ENCODE measurements at regions of chr17 and their contacts with region 1.

Region 1: DNA sequence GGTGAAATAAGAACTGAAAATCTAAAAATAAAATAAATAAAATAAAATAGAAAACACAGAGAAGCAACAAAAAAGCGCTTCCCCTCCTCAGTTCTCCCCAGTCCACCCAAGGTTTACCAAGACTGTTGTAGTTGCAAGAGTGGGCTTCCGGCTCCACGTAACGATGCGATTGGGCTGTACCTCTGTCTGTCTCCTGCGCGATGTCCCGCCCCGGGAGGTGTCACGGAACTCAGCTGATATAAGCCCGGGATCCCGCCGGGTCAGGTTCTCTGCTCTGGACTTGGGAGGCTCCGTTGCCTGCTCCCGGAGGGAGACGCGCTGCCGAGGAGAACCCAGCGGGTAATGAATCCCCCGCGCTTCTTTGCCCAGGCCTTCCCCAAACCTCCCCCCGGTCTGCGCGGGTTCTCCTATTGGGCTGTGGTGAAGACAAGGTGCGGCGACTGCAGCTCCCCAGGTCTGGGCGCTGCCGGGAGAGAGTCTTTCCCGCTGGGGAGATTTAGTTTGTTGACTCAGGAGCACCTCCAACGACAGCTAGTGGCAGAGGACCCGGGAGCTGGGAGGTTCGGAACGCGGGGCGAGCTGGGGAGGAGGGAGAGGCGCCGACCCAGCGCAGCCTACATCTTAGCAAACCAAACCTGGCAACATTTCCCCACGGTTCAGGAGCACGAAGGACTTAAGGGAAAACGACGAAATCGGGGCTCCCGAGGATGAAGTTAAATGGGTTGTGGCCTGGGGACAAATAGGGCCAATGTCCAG is at the start of gene SLFN5:
- DNase-seq: peak; percentile 76
- ATAC-seq: peak; percentile 91
- H3K4me3 ChIP-seq: peak within 1 kb of the TSS; percentile 73 to 75
- H3K27ac ChIP-seq: peak within 1 kb of the TSS; percentile 58
- H3K4me1 ChIP-seq: peaks cover 28% of the 10 kb centered on the region in 2 experiments
- H3K27me3 ChIP-seq: no peaks in the 10 kb centered on the region
- CTCF ChIP-seq: no peak
- POLR2A ChIP-seq: no peak
- RAD21 ChIP-seq: no peak
- total RNA-seq, gene SLFN5: 23.7 TPM

Region 2: DNA sequence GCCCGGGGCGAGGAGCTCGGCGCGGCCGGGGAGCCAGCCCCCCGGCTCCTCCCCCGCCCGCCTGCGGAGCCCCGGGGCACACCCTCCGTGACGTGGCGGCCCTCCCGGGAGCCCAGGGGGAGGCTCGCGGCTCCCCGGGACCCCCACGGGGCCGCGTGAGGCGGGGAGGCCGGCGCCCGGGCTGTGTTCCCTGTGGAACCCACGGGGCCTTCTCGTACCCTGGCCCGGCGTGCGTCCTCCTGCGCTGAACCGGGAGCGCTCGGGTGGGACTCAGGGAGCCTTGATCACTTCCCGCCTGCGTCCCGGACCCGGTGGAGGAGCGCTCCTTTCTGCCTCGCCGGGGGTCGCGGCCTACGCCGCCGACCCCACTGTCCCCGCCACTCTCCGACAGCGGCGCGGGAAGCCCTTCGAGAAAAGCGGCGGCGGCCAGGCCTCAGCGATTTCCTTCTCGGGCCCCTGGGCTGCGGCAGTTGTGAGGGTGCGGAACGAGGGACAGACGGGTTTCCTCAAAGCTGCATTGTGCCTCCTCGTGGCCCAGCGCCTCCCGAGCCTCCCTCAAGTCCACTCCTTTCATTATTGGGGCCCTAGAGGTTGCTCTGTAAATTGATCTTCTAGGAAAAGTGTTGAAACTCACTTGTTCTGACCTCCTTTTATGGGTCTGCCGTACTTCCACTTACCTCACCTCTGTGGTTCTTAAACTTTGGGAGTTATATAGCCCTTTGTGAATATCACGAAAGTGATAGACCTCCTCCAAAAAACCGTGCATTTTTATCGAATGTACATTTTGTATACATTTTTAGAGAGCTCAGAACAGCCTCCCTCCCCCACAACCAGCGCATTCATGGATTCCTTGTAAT is 262.1 kb before region 1 on chr17:
- CTCF ChIA-PET with region 1: no interaction called
- POLR2A ChIA-PET with region 1: no interaction called
- RAD21 ChIA-PET with region 1: no interaction called
- intact Hi-C with region 1: loop called (anchors 5 kb)
- DNase-seq: peak; percentile 56
- ATAC-seq: peak; percentile 88
- H3K4me3 ChIP-seq: peak overlapping the region; percentile 68 to 80
- H3K27ac ChIP-seq: peak overlapping the region; percentile 87
- H3K4me1 ChIP-seq: peaks cover 9 to 19% of the 10 kb centered on the region in 2 experiments; a peak in 3 of 4 replicates
- H3K27me3 ChIP-seq: no peaks in the 10 kb centered on the region
- CTCF ChIP-seq: peak; percentile 27 to 38 (median 35); a peak in 5 of 6 replicates
- POLR2A ChIP-seq: no peak
- RAD21 ChIP-seq: peak; percentile 40

Region 3: GRCh38 chr17:35141681-35142466 is 101.1 kb before region 1 on chr17 and contains the start of gene NLE1:
- CTCF ChIA-PET with region 1: no interaction called
- POLR2A ChIA-PET with region 1: no interaction called
- RAD21 ChIA-PET with region 1: no interaction called
- intact Hi-C with region 1: loop called (anchors 1 kb)
- DNase-seq: peak; percentile 71
- ATAC-seq: peak; percentile 93
- H3K4me3 ChIP-seq: peak within 1 kb of the TSS; percentile 97 to 99
- H3K27ac ChIP-seq: peak within 1 kb of the TSS; percentile 70
- H3K4me1 ChIP-seq: peaks cover 3 to 10% of the 10 kb centered on the region in 2 experiments; a peak in 3 of 4 replicates
- H3K27me3 ChIP-seq: no peaks in the 10 kb centered on the region
- CTCF ChIP-seq: peak; percentile 63 to 83 (median 83)
- POLR2A ChIP-seq: no peak
- RAD21 ChIP-seq: peak; percentile 41
- total RNA-seq, gene NLE1: 55.5 TPM

Region 4: DNA sequence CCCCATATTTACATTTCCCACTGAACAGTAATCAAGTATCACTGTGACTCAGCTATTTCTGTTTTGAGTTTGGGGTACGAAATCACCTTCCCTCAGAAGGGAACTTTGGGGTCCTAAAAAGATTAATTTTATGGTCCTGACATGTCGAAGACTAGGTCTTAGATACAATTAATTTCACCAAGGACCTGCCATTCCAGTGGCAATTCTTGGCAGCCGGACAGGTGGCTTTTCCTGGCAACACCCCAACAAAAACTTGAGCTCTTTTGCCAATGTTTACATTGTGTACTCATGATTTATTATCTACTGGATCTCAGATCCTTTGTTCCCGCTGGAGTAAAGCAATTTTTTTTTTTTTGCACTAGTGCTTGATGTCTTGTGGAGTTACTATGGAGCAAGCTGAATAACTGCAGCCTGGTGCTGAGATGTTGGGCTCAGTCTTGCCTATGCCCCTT is 14.3 kb after region 1 on chr17:
- CTCF ChIA-PET with region 1: no interaction called
- POLR2A ChIA-PET with region 1: interaction called, 12 read pairs
- RAD21 ChIA-PET with region 1: no interaction called
- intact Hi-C with region 1: no loop called
- DNase-seq: peak; percentile 59
- ATAC-seq: peak; percentile 46
- H3K4me3 ChIP-seq: no peak overlapping the region
- H3K27ac ChIP-seq: peak overlapping the region; percentile 34; the same call in 1 of the 2 replicates
- H3K4me1 ChIP-seq: peaks cover 36 to 46% of the 10 kb centered on the region in 2 experiments
- H3K27me3 ChIP-seq: peaks cover 6% of the 10 kb centered on the region; the same call in 1 of the 2 replicates
- CTCF ChIP-seq: no peak
- POLR2A ChIP-seq: no peak
- RAD21 ChIP-seq: no peak

Region 5: DNA sequence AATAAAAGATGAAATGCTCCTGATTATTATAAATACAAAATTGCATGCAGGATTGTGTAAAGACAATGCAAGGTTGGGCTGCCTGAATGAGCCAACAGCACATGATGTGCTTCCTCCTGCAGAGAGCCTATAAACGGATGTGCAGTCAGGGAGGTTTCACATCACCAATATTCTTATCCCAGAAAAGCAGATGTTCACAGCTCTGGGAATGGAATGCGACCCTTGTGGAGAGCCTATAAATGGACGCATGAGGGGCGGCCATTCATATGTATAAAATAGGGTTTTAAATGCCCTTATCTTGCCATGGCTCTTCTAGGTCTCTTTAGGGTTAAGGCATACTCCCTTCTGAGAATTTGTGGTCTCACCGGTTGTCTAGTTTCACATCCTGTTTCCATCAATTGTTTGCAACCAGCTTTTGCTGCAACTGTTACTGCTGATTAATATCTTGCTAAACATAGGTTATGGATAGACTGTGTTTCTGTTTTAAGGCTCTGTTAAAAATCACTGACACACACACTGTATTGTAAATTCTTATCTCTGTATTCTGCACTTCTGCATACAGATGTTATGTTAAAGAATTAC is 98.5 kb after region 1 on chr17:
- CTCF ChIA-PET with region 1: no interaction called
- POLR2A ChIA-PET with region 1: no interaction called
- RAD21 ChIA-PET with region 1: no interaction called
- intact Hi-C with region 1: no loop called
- DNase-seq: no peak
- ATAC-seq: no peak
- H3K4me3 ChIP-seq: no peak overlapping the region
- H3K27ac ChIP-seq: no peak overlapping the region
- H3K4me1 ChIP-seq: no peaks in the 10 kb centered on the region
- H3K27me3 ChIP-seq: peaks cover 34% of the 10 kb centered on the region
- CTCF ChIP-seq: no peak
- POLR2A ChIP-seq: no peak
- RAD21 ChIP-seq: no peak

Region 6: GRCh38 chr17:36133602-36134236 is 890.7 kb after region 1 on chr17:
- CTCF ChIA-PET with region 1: no interaction called
- POLR2A ChIA-PET with region 1: no interaction called
- RAD21 ChIA-PET with region 1: no interaction called
- intact Hi-C with region 1: no loop called
- DNase-seq: no peak
- ATAC-seq: no peak
- H3K4me3 ChIP-seq: no peak overlapping the region
- H3K27ac ChIP-seq: no peak overlapping the region
- H3K4me1 ChIP-seq: no peaks in the 10 kb centered on the region
- H3K27me3 ChIP-seq: 0 out of 2 replicates have a peak, but pooled peaks cover 7% of the 10 kb centered on the region
- CTCF ChIP-seq: no peak
- POLR2A ChIP-seq: no peak
- RAD21 ChIP-seq: no peak

Measured in HCT116 (cell line).